Mammary epithelial cell (primary cell): ENCODE measurements at regions of chr5 and their contacts with region 1.

Region 1: DNA sequence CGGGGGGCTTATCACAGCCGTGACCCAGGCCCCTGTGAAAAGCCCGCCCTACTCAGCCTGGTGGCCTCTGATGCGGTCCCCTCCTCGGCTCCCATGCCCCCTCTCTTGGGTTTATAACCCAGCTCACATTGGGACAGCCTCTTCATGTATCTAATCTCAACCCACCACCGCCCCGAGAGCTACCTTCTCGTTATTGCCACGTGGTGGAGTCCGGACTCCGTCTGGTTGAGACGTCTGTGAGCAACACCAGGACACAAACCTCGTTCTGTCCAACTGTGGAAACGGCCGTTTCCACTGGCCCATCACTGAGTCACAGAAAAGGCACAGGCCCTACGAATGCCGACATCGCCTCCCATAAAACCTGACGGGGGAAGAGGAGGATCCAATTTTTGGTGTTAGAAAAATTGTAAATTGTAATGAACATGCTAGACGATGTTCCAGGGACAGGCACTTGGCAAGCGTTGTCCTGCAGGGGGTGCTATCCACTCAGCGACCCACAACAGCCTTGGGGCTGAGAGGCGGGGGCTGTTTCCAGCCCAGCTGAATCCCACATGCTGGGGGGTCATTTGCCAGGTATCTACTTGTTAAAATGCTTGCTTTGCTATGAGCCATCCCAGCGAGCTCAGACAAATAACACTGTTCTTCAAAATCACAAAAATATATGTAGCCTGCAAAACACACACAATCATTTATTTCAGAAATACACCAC is 37.3 kb upstream of the N4BP3 start:
- DNase-seq: peak; percentile 65
- H3K4me3 ChIP-seq: peak overlapping the region in 1 of 3 experiments; percentile 18
- H3K27ac ChIP-seq: no peak overlapping the region
- H3K4me1 ChIP-seq: peaks cover 13% of the 10 kb centered on the region
- H3K27me3 ChIP-seq: peaks cover 3% of the 10 kb centered on the region
- CTCF ChIP-seq: peak; percentile 74 to 91

Region 2: GRCh38 chr5:178130604-178131485 is 54.9 kb after region 1 on chr5 and contains the start of gene RMND5B:
- CTCF ChIA-PET with region 1: no interaction called
- dilution Hi-C with region 1: no loop called
- in situ Hi-C with region 1: no loop called
- intact Hi-C with region 1: loop called (anchors 5 kb)
- DNase-seq: peak; percentile 65
- H3K4me3 ChIP-seq: peak within 1 kb of the TSS; percentile 81 to 98 (median 85)
- H3K27ac ChIP-seq: peak within 1 kb of the TSS; percentile 64
- H3K4me1 ChIP-seq: peaks cover 5% of the 10 kb centered on the region
- H3K27me3 ChIP-seq: no peaks in the 10 kb centered on the region
- CTCF ChIP-seq: no peak
- total RNA-seq, gene RMND5B: 15.3 to 23.8 TPM

Region 3: DNA sequence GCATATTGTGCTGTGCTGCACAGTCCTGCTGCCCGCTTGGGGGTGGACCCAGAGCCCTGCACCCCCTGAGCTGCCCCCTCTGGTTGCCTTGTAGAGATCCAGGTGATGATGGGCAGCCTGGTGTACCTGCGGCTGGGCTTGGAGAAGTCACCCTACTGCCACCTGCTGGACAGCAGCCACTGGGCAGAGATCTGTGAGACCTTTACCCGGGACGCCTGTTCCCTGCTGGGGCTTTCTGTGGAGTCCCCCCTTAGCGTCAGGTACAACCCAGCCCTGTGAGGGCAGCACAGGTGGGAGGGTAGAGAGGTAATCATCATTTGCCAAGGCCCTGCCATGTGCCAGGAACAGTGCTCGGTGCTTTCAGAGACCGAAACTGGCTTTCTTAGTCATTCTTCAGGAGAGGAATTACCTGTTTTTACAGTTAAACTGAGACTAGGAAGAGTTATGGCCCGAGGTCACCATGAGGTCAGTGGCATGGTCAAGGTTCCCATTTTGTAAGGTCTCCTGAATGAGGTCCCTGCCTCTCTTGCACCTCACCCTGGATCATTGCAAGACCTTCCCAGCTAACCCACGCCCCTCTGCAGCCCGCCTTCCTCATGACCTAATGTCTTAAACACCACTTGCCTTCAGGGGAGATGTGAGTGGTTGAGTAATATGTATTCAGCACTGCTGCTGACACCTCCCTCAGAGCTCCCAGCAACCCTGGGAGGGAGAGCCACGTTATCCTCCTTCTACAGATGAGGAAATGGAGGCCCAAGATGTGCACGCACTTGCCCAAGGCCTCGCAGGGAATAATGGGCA is 70.2 kb after region 1 on chr5:
- CTCF ChIA-PET with region 1: interaction called, 3 read pairs
- dilution Hi-C with region 1: loop called (anchors 5 kb)
- in situ Hi-C with region 1: loop called in 1 of 2 experiments (anchors 5 kb)
- intact Hi-C with region 1: loop called (anchors 1 kb)
- DNase-seq: peak; percentile 81
- H3K4me3 ChIP-seq: no peak overlapping the region
- H3K27ac ChIP-seq: no peak overlapping the region
- H3K4me1 ChIP-seq: peaks cover 12% of the 10 kb centered on the region
- H3K27me3 ChIP-seq: no peaks in the 10 kb centered on the region
- CTCF ChIP-seq: peak; percentile 84 to 94

Region 4: DNA sequence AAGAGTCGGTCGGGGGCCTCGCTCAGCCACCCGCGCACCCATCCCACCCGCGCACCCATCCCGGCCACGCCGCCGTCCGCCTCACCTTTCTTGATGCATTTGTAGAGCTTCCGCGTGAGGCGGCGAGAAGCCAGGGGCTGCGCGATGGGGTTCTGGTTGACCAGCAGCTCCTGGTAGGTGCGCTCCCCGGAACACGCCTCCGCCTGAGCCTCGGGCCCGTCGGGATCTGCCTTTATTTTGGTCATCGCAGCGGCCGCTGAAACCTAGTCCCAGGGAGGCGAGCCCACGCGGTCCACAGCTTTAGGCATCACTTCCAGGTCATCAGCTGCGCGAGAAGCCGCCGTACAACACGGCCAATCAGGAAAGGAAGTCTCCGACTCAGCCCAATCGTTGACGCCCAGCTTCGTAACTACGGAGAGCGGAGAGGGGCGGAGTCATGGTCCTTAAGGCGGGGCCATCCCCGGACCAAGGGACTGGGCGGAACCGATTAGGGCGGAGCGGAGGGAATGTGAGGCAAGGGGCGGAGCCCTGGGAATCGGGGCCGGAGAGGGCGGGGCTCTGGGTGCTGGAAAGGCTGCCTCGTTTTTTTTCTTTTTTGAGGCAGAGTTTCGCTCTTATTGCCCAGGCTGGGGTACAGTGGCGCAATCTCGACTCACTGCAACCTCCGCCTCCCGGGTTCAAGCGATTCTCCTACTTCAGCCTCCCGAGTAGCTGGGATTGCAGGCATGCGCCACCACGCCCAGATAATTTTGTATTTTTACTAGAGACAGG is 77.8 kb after region 1 on chr5 and contains the start of gene NHP2:
- CTCF ChIA-PET with region 1: interaction called, 11 read pairs
- dilution Hi-C with region 1: loop called (anchors 5 kb)
- in situ Hi-C with region 1: loop called (anchors 5 kb)
- intact Hi-C with region 1: no loop called
- DNase-seq: peak; percentile 98
- H3K4me3 ChIP-seq: peak within 1 kb of the TSS; percentile 67 to 92 (median 83)
- H3K27ac ChIP-seq: peak within 1 kb of the TSS; percentile 36
- H3K4me1 ChIP-seq: peaks cover 10% of the 10 kb centered on the region
- H3K27me3 ChIP-seq: no peaks in the 10 kb centered on the region
- CTCF ChIP-seq: no peak
- total RNA-seq, gene NHP2: 72.8 to 152 TPM